ENCODE measurements at regions of chr1 and their contacts with region 1.

Region 1: GRCh38 chr1:32761253-32761880 is 55.8 kb downstream of the YARS1 start:
- DNase-seq: peak; percentile 96
- H3K4me3 Mint-ChIP-seq: peak overlapping the region; percentile 72
- H3K27ac Mint-ChIP-seq: peak overlapping the region; percentile 97
- H3K4me1 Mint-ChIP-seq: peaks cover 51% of the 10 kb centered on the region
- H3K27me3 Mint-ChIP-seq: no peaks in the 10 kb centered on the region
- CTCF ChIP-seq: no peak

Region 2: DNA sequence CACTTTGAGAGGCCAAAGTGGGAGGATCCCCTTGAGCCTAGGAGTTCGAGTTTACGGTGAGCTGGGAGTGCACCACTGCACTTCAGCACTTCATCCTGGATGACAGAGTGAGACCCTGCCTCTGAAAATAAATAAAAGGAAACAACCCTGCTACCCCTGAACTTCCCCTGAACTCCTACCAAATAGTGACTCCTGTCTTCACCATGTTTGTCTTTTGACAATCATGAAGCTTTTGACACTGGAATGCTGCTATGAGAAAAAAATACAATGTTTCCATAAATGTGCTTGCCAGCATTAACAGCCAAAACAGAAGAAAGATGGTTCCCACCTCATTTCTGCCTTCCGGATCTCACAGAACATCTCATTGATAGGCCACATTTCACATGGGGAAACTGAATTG is 211.8 kb before region 1 on chr1:
- CTCF ChIA-PET with region 1: no interaction called
- POLR2A ChIA-PET with region 1: no interaction called
- intact Hi-C with region 1: no loop called
- DNase-seq: no peak
- H3K4me3 Mint-ChIP-seq: no peak overlapping the region
- H3K27ac Mint-ChIP-seq: no peak overlapping the region
- H3K4me1 Mint-ChIP-seq: peaks cover 6% of the 10 kb centered on the region
- H3K27me3 Mint-ChIP-seq: no peaks in the 10 kb centered on the region
- CTCF ChIP-seq: no peak

Region 3: DNA sequence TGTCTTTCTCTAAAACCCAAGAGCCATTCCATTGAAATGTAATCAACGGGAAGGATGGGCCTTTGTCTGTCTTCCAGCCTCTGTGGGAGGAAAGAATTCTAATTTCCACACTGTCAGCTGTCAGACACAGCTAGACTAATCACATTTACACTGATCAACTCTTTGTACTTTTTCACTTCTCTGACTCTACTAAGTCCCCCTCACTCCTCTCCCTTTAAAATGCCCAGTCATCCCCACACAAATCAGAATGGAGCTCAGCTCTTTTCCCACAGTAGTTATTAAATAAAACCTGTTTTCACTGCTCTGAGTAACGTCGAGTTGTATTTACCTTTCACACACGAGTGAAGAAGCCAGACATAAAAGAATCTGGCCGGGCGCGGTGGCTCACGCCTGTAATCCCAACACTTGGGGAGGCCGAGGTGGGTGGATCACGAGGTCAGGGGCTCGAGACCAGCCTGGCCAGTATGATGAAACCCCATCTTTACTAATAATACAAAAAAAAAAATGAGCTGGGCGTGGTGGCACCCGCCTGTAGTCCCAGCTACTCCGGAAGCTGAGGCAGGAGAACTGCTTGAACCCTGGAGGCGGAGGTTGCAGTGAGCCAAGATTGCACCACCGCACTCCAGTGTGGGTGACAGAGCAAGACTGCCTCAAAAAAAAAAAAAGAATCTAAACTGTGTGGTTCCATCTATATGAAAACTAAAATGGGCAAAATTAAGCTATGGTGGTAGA is 124.3 kb before region 1 on chr1:
- CTCF ChIA-PET with region 1: no interaction called
- POLR2A ChIA-PET with region 1: no interaction called
- intact Hi-C with region 1: no loop called
- DNase-seq: peak; percentile 67
- H3K4me3 Mint-ChIP-seq: peak overlapping the region; percentile 66
- H3K27ac Mint-ChIP-seq: peak overlapping the region; percentile 87
- H3K4me1 Mint-ChIP-seq: peaks cover 11% of the 10 kb centered on the region
- H3K27me3 Mint-ChIP-seq: no peaks in the 10 kb centered on the region
- CTCF ChIP-seq: no peak

Region 4: GRCh38 chr1:32724678-32725614 is 36.4 kb before region 1 on chr1:
- CTCF ChIA-PET with region 1: interaction called, 418 read pairs
- POLR2A ChIA-PET with region 1: interaction called, 7 read pairs
- intact Hi-C with region 1: loop called (anchors 5 kb)
- DNase-seq: peak; percentile 93
- H3K4me3 Mint-ChIP-seq: no peak overlapping the region
- H3K27ac Mint-ChIP-seq: peak overlapping the region; percentile 71
- H3K4me1 Mint-ChIP-seq: peaks cover 16% of the 10 kb centered on the region
- H3K27me3 Mint-ChIP-seq: no peaks in the 10 kb centered on the region
- CTCF ChIP-seq: no peak

Region 5: GRCh38 chr1:32741413-32742198 is 19.8 kb before region 1 on chr1:
- CTCF ChIA-PET with region 1: interaction called, 9 read pairs
- POLR2A ChIA-PET with region 1: interaction called, 53 read pairs
- intact Hi-C with region 1: no loop called
- DNase-seq: no peak
- H3K4me3 Mint-ChIP-seq: peak overlapping the region; percentile 75
- H3K27ac Mint-ChIP-seq: peak overlapping the region; percentile 63
- H3K4me1 Mint-ChIP-seq: peaks cover 27% of the 10 kb centered on the region
- H3K27me3 Mint-ChIP-seq: no peaks in the 10 kb centered on the region
- CTCF ChIP-seq: peak; percentile 59

Region 6: DNA sequence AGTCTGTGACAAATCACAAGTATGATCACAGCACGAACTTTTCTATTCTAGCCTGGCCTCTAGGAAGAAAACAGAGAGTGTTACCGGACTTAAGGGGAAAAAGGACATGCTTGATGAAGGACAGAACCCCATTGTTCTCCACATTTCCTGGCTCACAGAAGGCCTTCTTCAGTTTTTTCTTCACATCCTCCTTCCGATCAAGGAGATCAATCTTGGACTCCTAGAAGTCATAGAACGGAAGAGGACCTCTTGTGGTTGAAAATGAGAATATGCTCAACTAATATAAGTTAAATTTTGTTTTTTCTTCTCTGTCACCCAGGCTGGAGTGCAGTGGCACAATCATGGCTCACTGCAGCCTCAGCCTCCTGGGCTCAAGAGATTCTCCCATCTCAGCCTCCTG is 25.5 kb after region 1 on chr1:
- CTCF ChIA-PET with region 1: interaction called, 3 read pairs
- POLR2A ChIA-PET with region 1: interaction called, 11 read pairs
- intact Hi-C with region 1: no loop called
- DNase-seq: no peak
- H3K4me3 Mint-ChIP-seq: no peak overlapping the region
- H3K27ac Mint-ChIP-seq: no peak overlapping the region
- H3K4me1 Mint-ChIP-seq: peaks cover 2% of the 10 kb centered on the region
- H3K27me3 Mint-ChIP-seq: no peaks in the 10 kb centered on the region
- CTCF ChIP-seq: no peak